Activated CD8-positive, alpha-beta memory T cell treated with anti-CD3 and anti-CD28 coated beads, Interleukin-2, amount 10 ng/mL, durations not matched to agents 7 days and 5 days (primary cell): ENCODE measurements at regions of chr15 and their contacts with region 1.

Region 1: GRCh38 chr15:98518823-98519561 is 129.3 kb upstream of the IGF1R start:
- DNase-seq: peak; percentile 51
- ATAC-seq: peak; percentile 69
- H3K4me3 Mint-ChIP-seq: no peak overlapping the region
- H3K27ac Mint-ChIP-seq: no peak overlapping the region
- H3K4me1 Mint-ChIP-seq: peaks cover 4% of the 10 kb centered on the region
- H3K27me3 Mint-ChIP-seq: no peaks in the 10 kb centered on the region

Region 2: DNA sequence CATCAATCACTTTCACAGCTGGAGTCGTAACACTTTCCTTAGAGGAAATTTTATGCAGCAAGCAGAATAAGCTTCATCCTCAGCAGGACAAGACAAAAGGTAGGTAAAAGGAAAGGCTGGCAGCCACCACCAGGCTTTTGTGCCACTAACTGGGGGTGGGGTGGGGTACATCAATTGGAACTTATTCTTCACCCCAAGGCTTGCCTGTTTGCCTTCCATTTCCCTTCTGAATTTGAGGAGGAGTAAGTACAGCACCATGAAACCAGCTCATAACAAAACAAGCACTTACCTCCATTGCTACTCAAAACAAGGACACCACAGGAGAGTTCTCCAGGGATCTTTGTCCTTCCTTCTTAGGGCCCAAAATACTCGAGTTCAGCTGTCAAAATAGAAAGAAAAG is 261.7 kb before region 1 on chr15:
- CTCF ChIA-PET with region 1: no interaction called
- DNase-seq: no peak
- ATAC-seq: no peak
- H3K4me3 Mint-ChIP-seq: no peak overlapping the region
- H3K27ac Mint-ChIP-seq: no peak overlapping the region
- H3K4me1 Mint-ChIP-seq: no peaks in the 10 kb centered on the region
- H3K27me3 Mint-ChIP-seq: no peaks in the 10 kb centered on the region

Region 3: DNA sequence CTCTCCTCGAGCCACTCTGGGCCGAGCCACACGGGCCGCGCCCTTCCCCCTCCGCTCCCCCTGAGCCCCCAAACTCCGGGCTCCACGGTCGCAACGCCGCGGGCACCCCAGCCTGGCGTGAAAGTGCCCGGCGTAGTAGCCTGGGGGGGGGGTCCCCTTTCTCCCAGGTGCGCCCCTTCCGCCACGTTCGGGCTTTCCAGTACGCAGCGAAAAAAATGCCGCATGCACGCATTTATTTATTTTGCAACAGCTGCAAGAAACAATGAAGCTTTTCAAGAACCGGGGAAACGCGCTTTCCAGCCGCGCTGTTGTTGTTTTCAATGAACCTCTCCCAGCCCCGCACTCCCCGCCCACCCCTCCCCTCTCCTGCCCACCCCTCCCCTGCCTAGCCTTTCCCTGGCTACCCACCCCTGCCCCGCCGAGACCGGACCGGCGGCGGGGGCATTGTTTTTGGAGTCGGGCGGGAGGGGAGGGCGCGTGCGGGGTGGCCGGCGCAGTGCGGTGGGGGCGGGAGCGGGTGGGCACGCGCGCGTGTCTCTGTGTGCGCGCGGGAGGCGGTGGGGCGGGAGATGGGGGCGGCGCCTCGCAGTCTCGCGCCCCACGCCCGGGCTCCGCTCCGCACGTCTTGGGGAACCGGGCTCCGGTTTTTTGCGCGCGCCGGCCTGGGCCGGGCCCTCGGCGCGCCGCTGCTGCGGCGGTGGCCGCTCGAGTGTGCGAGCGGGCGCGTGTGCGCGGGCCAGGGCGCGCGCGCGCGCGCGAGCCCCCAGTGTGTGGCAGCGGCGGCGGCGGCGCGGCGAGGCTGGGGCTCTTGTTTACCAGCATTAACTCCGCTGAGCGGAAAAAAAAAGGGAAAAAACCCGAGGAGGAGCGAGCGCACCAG is 129.0 kb after region 1 on chr15 and contains the start of gene IGF1R:
- CTCF ChIA-PET with region 1: interaction called, 27 read pairs
- DNase-seq: peak; percentile 81
- ATAC-seq: peak; percentile 76
- H3K4me3 Mint-ChIP-seq: peak within 1 kb of the TSS; percentile 70
- H3K27ac Mint-ChIP-seq: peak within 1 kb of the TSS; percentile 75
- H3K4me1 Mint-ChIP-seq: peaks cover 24% of the 10 kb centered on the region
- H3K27me3 Mint-ChIP-seq: peaks cover 58% of the 10 kb centered on the region
- total RNA-seq, gene IGF1R: 6.2 to 7.0 TPM

Region 4: GRCh38 chr15:98658831-98659699 is 140.1 kb after region 1 on chr15:
- CTCF ChIA-PET with region 1: interaction called, 33 read pairs
- DNase-seq: no peak
- ATAC-seq: peak; percentile 71
- H3K4me3 Mint-ChIP-seq: no peak overlapping the region
- H3K27ac Mint-ChIP-seq: no peak overlapping the region
- H3K4me1 Mint-ChIP-seq: no peaks in the 10 kb centered on the region
- H3K27me3 Mint-ChIP-seq: peaks cover 18% of the 10 kb centered on the region